Activated T-helper 1 cell treated with anti-CD3 and anti-CD28 coated beads, Interleukin-12 subunit alpha, Interleukin-12 subunit beta, Interleukin-2, Interleukin-4 antibody, amounts not matched to agents 30 ng/mL and 10 ng/mL and 1 ng/mL, durations not matched to agents 14 hours and 24 hours and 36 hours (primary cell): ENCODE measurements at regions of chr1 and their contacts with region 1.

Region 1: GRCh38 chr1:221741711-221742554 is at the start of gene DUSP10:
- DNase-seq: peak; percentile 99
- H3K4me3 Mint-ChIP-seq: no peak within 1 kb of the TSS
- H3K27ac Mint-ChIP-seq: peak within 1 kb of the TSS; percentile 77
- H3K4me1 Mint-ChIP-seq: peaks cover 9% of the 10 kb centered on the region
- H3K27me3 Mint-ChIP-seq: no peaks in the 10 kb centered on the region
- total RNA-seq, gene DUSP10: 19.2 and 19.4 TPM in 2 replicates

Region 2: GRCh38 chr1:221435504-221435904 is 306.4 kb before region 1 on chr1:
- intact Hi-C with region 1: loop called (anchors 1 kb)
- DNase-seq: no peak
- H3K4me3 Mint-ChIP-seq: no peak overlapping the region
- H3K27ac Mint-ChIP-seq: no peak overlapping the region
- H3K4me1 Mint-ChIP-seq: peaks cover 24% of the 10 kb centered on the region
- H3K27me3 Mint-ChIP-seq: peaks cover 2% of the 10 kb centered on the region

Region 3: GRCh38 chr1:221494670-221495069 is 247.3 kb before region 1 on chr1:
- intact Hi-C with region 1: no loop called
- DNase-seq: no peak
- H3K4me3 Mint-ChIP-seq: no peak overlapping the region
- H3K27ac Mint-ChIP-seq: no peak overlapping the region
- H3K4me1 Mint-ChIP-seq: no peaks in the 10 kb centered on the region
- H3K27me3 Mint-ChIP-seq: peaks cover 1% of the 10 kb centered on the region

Region 4: GRCh38 chr1:221725735-221726672 is 15.9 kb before region 1 on chr1:
- intact Hi-C with region 1: loop called (anchors 1 kb)
- DNase-seq: no peak
- H3K4me3 Mint-ChIP-seq: peak overlapping the region; percentile 55
- H3K27ac Mint-ChIP-seq: peak overlapping the region; percentile 92
- H3K4me1 Mint-ChIP-seq: peaks cover 87% of the 10 kb centered on the region
- H3K27me3 Mint-ChIP-seq: no peaks in the 10 kb centered on the region

Region 5: DNA sequence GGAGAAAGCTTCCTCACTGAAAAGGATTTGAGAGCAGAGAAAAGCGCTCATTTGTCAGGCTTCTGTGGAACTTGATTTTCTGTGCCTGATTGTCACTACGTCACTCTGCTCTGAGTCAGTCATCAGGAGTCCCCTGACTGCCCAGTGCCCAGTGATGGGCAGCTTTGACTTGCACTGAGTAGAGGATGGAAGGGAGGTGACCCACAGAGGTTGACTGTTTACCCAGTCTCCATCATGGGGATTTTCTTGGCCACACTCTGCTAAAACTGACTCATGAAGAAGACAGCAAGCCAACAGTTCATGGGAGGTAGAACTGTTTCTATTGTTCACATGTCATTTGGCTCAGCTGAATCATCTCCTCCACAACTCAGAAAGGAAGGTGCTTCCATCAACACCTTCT is 82.1 kb after region 1 on chr1:
- intact Hi-C with region 1: loop called (anchors 1 kb)
- DNase-seq: no peak
- H3K4me3 Mint-ChIP-seq: no peak overlapping the region
- H3K27ac Mint-ChIP-seq: peak overlapping the region; percentile 24
- H3K4me1 Mint-ChIP-seq: peaks cover 65% of the 10 kb centered on the region
- H3K27me3 Mint-ChIP-seq: peaks cover 8% of the 10 kb centered on the region

Region 6: GRCh38 chr1:221994274-221994698 is 252.4 kb after region 1 on chr1:
- intact Hi-C with region 1: loop called (anchors 1 kb)
- DNase-seq: no peak
- H3K4me3 Mint-ChIP-seq: no peak overlapping the region
- H3K27ac Mint-ChIP-seq: peak overlapping the region; percentile 77
- H3K4me1 Mint-ChIP-seq: peaks cover 40% of the 10 kb centered on the region
- H3K27me3 Mint-ChIP-seq: peaks cover 2% of the 10 kb centered on the region

Region 7: GRCh38 chr1:222073307-222073995 is 331.5 kb after region 1 on chr1:
- intact Hi-C with region 1: no loop called
- DNase-seq: no peak
- H3K4me3 Mint-ChIP-seq: no peak overlapping the region
- H3K27ac Mint-ChIP-seq: no peak overlapping the region
- H3K4me1 Mint-ChIP-seq: no peaks in the 10 kb centered on the region
- H3K27me3 Mint-ChIP-seq: no peaks in the 10 kb centered on the region

Region 8: DNA sequence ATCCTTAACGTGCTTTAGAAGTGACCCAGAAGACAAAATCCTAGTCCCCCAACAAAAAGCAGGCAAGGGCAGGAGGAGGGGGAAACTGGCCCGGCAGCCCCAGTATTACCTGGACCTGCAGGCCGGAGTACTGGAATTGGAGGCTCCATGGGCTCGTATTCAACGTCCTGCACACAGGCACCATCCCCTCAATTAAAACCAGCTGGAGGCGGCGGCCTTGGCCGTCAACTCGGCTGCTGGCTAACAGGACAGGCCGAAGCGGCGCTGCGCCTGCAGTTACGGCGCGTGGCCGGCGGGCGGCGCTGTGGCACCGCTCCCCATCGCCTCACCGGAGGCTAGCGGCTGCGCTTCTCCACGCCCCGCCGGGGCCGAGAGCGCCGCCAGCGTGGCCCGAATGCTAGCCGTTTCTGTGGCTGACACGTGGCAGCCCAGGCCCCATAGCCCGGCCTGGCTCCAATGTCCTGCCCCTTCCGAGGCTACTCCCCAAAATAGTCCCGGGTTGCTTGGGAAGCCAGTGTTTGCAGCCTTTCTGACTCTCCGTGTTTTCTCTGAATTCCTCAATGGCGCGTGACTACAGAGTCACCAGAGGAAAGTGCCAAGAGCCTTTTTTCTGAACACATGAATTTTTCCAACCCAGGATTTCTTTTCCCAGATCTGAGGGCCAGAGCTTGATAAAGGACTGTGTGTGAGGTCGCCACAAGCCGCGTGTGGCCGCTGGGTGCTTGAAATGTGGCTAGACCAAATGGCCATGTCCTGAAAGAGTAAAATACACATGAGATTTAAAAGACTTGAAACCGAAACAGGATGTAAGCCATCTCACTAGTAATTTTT is 723.5 kb after region 1 on chr1:
- intact Hi-C with region 1: loop called (anchors 1 kb)
- DNase-seq: peak; percentile 73
- H3K4me3 Mint-ChIP-seq: peak overlapping the region; percentile 82
- H3K27ac Mint-ChIP-seq: peak overlapping the region; percentile 84
- H3K4me1 Mint-ChIP-seq: peaks cover 12% of the 10 kb centered on the region
- H3K27me3 Mint-ChIP-seq: peaks cover 27% of the 10 kb centered on the region